ENCODE measurements at regions of chr4 and their contacts with region 1.

Region 1: GRCh38 chr4:68249434-68249833 is 3.9 kb upstream of the TMPRSS11B start:
- DNase-seq: no peak
- H3K4me3 Mint-ChIP-seq: peak overlapping the region; percentile 64
- H3K27ac Mint-ChIP-seq: peak overlapping the region; percentile 93
- H3K4me1 Mint-ChIP-seq: peaks cover 10% of the 10 kb centered on the region
- H3K27me3 Mint-ChIP-seq: no peaks in the 10 kb centered on the region

Region 2: GRCh38 chr4:67522851-67523671 is 726.4 kb before region 1 on chr4:
- intact Hi-C with region 1: loop called (anchors 5 kb)
- DNase-seq: peak; percentile 69
- H3K4me3 Mint-ChIP-seq: peak overlapping the region; percentile 66
- H3K27ac Mint-ChIP-seq: peak overlapping the region; percentile 97
- H3K4me1 Mint-ChIP-seq: peaks cover 55% of the 10 kb centered on the region
- H3K27me3 Mint-ChIP-seq: no peaks in the 10 kb centered on the region

Region 3: DNA sequence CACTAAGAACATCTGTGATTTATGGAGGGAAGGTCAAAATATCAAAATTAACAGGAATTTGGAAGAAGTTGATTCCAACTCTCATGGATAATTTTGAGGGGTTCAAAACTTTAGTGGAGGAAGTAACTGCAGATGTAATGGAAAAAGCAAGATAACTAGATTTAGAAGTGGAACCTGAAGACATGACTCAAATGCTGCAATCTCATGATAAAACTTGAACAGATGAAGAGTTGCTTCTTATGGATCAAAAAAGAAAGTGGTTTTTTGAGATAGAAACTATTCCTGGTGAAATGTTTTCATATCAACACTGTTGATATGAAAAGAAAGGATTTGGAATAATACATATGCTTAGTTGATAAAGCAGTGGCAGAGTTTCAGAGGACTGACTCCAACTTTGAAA is 129.5 kb before region 1 on chr4:
- intact Hi-C with region 1: no loop called
- DNase-seq: no peak
- H3K4me3 Mint-ChIP-seq: no peak overlapping the region
- H3K27ac Mint-ChIP-seq: no peak overlapping the region
- H3K4me1 Mint-ChIP-seq: no peaks in the 10 kb centered on the region
- H3K27me3 Mint-ChIP-seq: no peaks in the 10 kb centered on the region

Region 4: DNA sequence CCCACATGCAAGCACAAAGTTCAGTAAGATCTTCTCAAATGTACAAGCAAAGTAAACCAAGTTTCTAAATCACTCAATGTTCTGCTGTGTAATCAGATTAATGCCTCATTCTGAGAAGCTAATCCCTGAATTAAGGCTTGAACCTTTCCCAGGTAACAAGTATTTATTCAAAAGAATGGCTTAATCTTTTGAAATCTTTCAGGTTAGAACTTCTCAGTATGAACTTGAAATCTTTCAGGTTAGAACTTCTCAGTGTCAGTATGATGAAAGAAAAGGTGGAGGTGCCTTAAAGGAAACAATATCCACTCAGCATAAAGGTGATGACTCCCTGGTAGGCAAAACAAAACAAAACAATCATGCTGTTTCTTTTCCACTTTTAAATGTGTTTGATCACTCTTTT is 32.9 kb before region 1 on chr4:
- intact Hi-C with region 1: loop called (anchors 1 kb)
- DNase-seq: no peak
- H3K4me3 Mint-ChIP-seq: no peak overlapping the region
- H3K27ac Mint-ChIP-seq: no peak overlapping the region
- H3K4me1 Mint-ChIP-seq: no peaks in the 10 kb centered on the region
- H3K27me3 Mint-ChIP-seq: no peaks in the 10 kb centered on the region

Region 5: GRCh38 chr4:68271851-68272756 is 22.7 kb after region 1 on chr4:
- intact Hi-C with region 1: loop called (anchors 2 kb)
- DNase-seq: no peak
- H3K4me3 Mint-ChIP-seq: peak overlapping the region; percentile 55
- H3K27ac Mint-ChIP-seq: no peak overlapping the region
- H3K4me1 Mint-ChIP-seq: peaks cover 14% of the 10 kb centered on the region
- H3K27me3 Mint-ChIP-seq: peaks cover 14% of the 10 kb centered on the region